ENCODE measurements at regions of chr17 and their contacts with region 1.

Region 1: DNA sequence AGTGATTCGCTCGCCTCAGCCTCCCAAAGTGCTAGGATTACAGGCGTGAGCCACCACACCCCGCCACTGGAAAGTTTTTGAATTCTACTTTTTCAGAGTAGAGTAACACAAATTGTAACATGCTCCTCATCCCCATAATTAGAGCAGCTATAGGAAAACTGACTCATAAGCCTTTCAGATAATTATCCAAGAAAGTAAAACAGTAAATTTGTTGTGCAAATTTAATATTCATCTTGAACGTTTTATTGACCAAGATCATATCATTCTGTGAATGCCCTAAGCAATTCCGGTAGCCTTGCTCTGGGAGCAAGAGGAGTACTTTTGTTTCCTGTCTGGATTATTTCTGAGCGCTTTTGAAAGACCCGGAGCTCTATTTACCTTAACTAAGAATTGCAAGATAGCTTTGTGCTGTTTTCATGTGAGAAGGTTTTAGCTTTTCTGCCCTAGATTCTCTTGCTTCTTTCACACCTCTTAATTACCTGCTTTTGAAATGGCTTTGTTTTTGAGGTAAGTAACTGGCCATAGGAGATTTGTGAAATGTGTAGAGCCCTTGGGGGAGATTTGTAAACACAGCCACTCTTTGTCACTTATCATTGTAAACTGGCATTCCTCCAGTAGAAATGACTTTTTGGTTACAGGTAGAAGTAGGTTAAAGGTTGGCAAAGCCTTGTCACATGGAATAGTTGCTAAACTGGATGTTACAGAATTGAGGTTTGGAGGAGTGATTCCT is 34.5 kb upstream of the YPEL2 start:
- DNase-seq: no peak
- H3K4me3 ChIP-seq: no peak overlapping the region
- H3K27ac ChIP-seq: no peak overlapping the region
- H3K4me1 ChIP-seq: no peaks in the 10 kb centered on the region
- H3K27me3 ChIP-seq: no peaks in the 10 kb centered on the region
- CTCF ChIP-seq: no peak

Region 2: DNA sequence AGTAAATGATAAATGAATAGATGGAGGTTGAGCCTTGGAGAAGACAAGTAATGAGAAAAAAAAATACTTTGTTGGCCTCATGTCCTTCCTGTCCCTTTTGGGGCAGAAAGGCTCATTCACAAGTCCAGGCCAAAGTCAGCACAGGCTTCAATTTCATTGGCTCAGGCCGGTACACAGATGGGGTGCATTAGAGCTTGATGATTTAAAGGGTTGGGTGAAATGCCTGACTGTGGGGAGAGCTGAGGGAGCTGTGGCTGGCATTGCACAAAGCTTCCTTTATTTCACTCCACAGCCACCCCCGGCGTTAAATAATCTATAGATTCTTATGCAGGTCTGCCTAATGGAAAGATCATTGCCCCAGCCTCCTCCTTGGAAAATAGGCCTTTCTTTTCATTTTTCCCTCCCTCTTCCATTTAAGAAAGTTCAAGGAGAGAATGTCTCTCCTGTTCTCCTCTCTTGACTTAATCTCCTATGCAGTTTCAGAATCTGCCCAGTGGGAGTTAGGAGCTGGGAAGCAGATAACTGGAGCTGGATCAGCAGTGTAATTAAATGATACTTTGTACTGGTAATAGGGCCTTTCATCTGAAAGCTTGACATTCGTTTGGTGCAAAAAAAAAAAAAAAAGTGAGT is 58.9 kb after region 1 on chr17:
- intact Hi-C with region 1: no loop called
- DNase-seq: no peak
- H3K4me3 ChIP-seq: no peak overlapping the region
- H3K27ac ChIP-seq: peak overlapping the region; percentile 58
- H3K4me1 ChIP-seq: peaks cover 99% of the 10 kb centered on the region
- H3K27me3 ChIP-seq: no peaks in the 10 kb centered on the region
- CTCF ChIP-seq: no peak

Region 3: GRCh38 chr17:59547131-59547915 is 250.4 kb after region 1 on chr17:
- intact Hi-C with region 1: loop called (anchors 10 kb)
- DNase-seq: no peak
- H3K4me3 ChIP-seq: no peak overlapping the region
- H3K27ac ChIP-seq: no peak overlapping the region
- H3K4me1 ChIP-seq: no peaks in the 10 kb centered on the region
- H3K27me3 ChIP-seq: no peaks in the 10 kb centered on the region
- CTCF ChIP-seq: no peak

Measured in left ventricle myocardium inferior (tissue), 1 donor.